GM12878 (cell line): ENCODE measurements at regions of chr2 and their contacts with region 1.

Region 1: DNA sequence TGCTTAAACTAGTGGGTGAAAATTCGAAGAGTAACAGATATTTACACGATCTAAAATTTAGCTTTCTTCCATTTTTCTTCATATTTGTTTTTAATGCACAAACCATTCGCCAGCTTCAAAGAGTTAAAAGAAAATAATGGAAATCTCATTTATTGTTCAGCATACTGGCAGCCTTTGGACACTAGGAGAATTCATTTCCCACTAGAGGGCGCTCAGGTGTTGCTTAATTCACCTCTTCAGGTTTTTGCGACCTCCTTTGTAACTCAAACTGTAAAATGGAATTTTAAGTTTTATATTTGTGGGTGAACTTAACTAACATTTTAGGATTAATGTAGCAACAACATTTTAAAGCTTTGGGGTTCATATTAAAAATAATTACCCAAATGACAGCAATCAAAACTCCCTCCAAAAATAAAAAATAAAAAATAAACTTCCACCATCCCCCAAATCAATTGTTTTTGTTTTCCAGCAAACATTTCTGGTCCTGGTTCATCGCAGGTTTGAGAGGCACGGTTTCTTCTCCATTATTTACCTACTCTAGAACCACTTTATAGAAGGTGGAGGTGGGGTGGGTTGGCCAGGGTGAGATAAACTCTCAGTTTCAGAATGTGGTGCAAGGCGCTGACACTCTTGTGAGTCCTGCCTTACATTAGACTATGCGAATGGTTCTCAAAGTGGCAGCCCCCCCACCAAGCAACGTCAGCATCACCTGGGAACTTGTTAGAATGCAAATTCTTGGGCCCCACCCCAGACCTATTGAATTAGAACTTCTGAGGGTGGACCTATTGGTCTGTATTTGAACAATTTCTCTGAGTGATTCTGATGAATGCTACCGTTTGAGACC is 24.7 kb upstream of the PNPT1 start:
- DNase-seq: peak; percentile 7
- ATAC-seq: peak; percentile 92
- H3K4me3 ChIP-seq: no peak overlapping the region
- H3K27ac ChIP-seq: no peak overlapping the region
- H3K4me1 ChIP-seq: no peaks in the 10 kb centered on the region
- H3K27me3 ChIP-seq: no peaks in the 10 kb centered on the region; a peak in 2 of 4 replicates
- CTCF ChIP-seq: peak; percentile 71 to 77 (median 74)
- EP300 ChIP-seq: no peak
- POLR2A ChIP-seq: no peak
- RAD21 ChIP-seq: peak; percentile 82

Region 2: DNA sequence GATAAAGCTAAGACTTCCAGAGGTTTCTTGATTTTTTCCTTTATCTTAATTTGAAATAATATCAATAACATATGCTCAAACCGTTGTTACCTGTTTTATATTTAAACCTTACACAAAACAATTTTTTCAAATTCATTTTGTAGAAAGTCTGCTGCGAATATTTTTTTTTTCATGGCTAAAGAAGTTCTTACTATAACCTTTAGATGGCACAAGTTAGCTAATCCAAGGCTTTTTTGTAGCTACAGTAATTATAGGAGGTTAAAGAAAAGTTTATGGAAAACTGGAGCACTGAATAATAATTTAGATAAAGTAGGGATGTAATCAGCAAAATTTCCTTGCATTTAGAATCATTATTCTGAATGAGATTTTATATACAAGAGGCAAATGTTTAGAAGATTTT is 53.2 kb after region 1 on chr2:
- CTCF ChIA-PET with region 1: interaction called, 10 read pairs
- POLR2A ChIA-PET with region 1: no interaction called
- RAD21 ChIA-PET with region 1: no interaction called
- SMC1A ChIA-PET with region 1: no interaction called
- in situ Hi-C with region 1: no loop called
- intact Hi-C with region 1: no loop called
- DNase-seq: no peak
- ATAC-seq: no peak
- H3K4me3 ChIP-seq: no peak overlapping the region
- H3K27ac ChIP-seq: no peak overlapping the region
- H3K4me1 ChIP-seq: no peaks in the 10 kb centered on the region
- H3K27me3 ChIP-seq: no peaks in the 10 kb centered on the region; a peak in 1 of 4 replicates
- CTCF ChIP-seq: peak in 2 of 3 experiments; percentile 21 to 31; a peak in 3 of 6 replicates
- EP300 ChIP-seq: no peak
- POLR2A ChIP-seq: no peak
- RAD21 ChIP-seq: peak; percentile 42

Region 3: GRCh38 chr2:55923091-55923981 is 204.9 kb after region 1 on chr2 and contains the start of gene EFEMP1:
- CTCF ChIA-PET with region 1: no interaction called
- POLR2A ChIA-PET with region 1: no interaction called
- RAD21 ChIA-PET with region 1: no interaction called
- SMC1A ChIA-PET with region 1: no interaction called
- in situ Hi-C with region 1: no loop called
- intact Hi-C with region 1: no loop called
- DNase-seq: no peak
- ATAC-seq: peak; percentile 83
- H3K4me3 ChIP-seq: no peak within 1 kb of the TSS
- H3K27ac ChIP-seq: no peak within 1 kb of the TSS
- H3K4me1 ChIP-seq: no peaks in the 10 kb centered on the region
- H3K27me3 ChIP-seq: peaks cover 4 to 13% of the 10 kb centered on the region in 2 experiments; a peak in 3 of 4 replicates
- CTCF ChIP-seq: 0 out of 6 replicates have a peak, but pooled peaks of 1 of the 3 experiments have one; percentile 3
- EP300 ChIP-seq: no peak
- POLR2A ChIP-seq: no peak
- RAD21 ChIP-seq: no peak
- polyA plus RNA-seq, gene EFEMP1: not detected

Region 4: GRCh38 chr2:55961318-55961911 is 243.0 kb after region 1 on chr2:
- CTCF ChIA-PET with region 1: interaction called, 66 read pairs
- POLR2A ChIA-PET with region 1: no interaction called
- RAD21 ChIA-PET with region 1: interaction called, 13 read pairs
- SMC1A ChIA-PET with region 1: interaction called, 14 read pairs
- in situ Hi-C with region 1: no loop called
- intact Hi-C with region 1: loop called (anchors 1 kb)
- DNase-seq: no peak
- ATAC-seq: peak; percentile 82
- H3K4me3 ChIP-seq: no peak overlapping the region
- H3K27ac ChIP-seq: no peak overlapping the region
- H3K4me1 ChIP-seq: no peaks in the 10 kb centered on the region
- H3K27me3 ChIP-seq: no peaks in the 10 kb centered on the region
- CTCF ChIP-seq: peak; percentile 46 to 54 (median 47)
- EP300 ChIP-seq: no peak
- POLR2A ChIP-seq: no peak
- RAD21 ChIP-seq: peak; percentile 51

Region 5: GRCh38 chr2:56132138-56132537 is 413.8 kb after region 1 on chr2:
- CTCF ChIA-PET with region 1: interaction called, 5 read pairs
- POLR2A ChIA-PET with region 1: no interaction called
- RAD21 ChIA-PET with region 1: no interaction called
- SMC1A ChIA-PET with region 1: no interaction called
- in situ Hi-C with region 1: loop called (anchors 5 kb)
- intact Hi-C with region 1: loop called (anchors 1 kb)
- DNase-seq: no peak
- ATAC-seq: peak; percentile 47; the same call in 1 of the 3 replicates
- H3K4me3 ChIP-seq: no peak overlapping the region
- H3K27ac ChIP-seq: no peak overlapping the region
- H3K4me1 ChIP-seq: no peaks in the 10 kb centered on the region
- H3K27me3 ChIP-seq: no peaks in the 10 kb centered on the region
- CTCF ChIP-seq: peak; percentile 20 to 42 (median 40); a peak in 2 of 6 replicates
- EP300 ChIP-seq: no peak
- POLR2A ChIP-seq: no peak
- RAD21 ChIP-seq: peak; percentile 64

Region 6: GRCh38 chr2:56898986-56899385 is 1180.6 kb after region 1 on chr2:
- CTCF ChIA-PET with region 1: no interaction called
- POLR2A ChIA-PET with region 1: no interaction called
- RAD21 ChIA-PET with region 1: no interaction called
- SMC1A ChIA-PET with region 1: no interaction called
- in situ Hi-C with region 1: no loop called
- intact Hi-C with region 1: no loop called
- DNase-seq: no peak
- ATAC-seq: no peak
- H3K4me3 ChIP-seq: no peak overlapping the region
- H3K27ac ChIP-seq: no peak overlapping the region
- H3K4me1 ChIP-seq: no peaks in the 10 kb centered on the region
- H3K27me3 ChIP-seq: no peaks in the 10 kb centered on the region
- CTCF ChIP-seq: no peak
- EP300 ChIP-seq: no peak
- POLR2A ChIP-seq: no peak
- RAD21 ChIP-seq: no peak